Psoas muscle (tissue), 8 donors: ENCODE measurements at regions of chr3 and their contacts with region 1.

Region 1: GRCh38 chr3:3170998-3171397 is 8.5 kb downstream of the CRBN start:
- DNase-seq: no peak
- ATAC-seq: no peak
- H3K4me3 ChIP-seq: no peak overlapping the region
- H3K27ac ChIP-seq: no peak overlapping the region
- H3K4me1 ChIP-seq: no peaks in the 10 kb centered on the region
- H3K27me3 ChIP-seq: no peaks in the 10 kb centered on the region
- CTCF ChIP-seq: peak; percentile 19

Region 2: GRCh38 chr3:3134750-3135448 is 36.1 kb before region 1 on chr3:
- intact Hi-C with region 1: loop called in 1 of 2 experiments (anchors 5 kb)
- DNase-seq: no peak
- ATAC-seq: peak in 3 of 4 donors; percentile 20 to 53 (median 42)
- H3K4me3 ChIP-seq: no peak overlapping the region
- H3K27ac ChIP-seq: no peak overlapping the region
- H3K4me1 ChIP-seq: no peaks in the 10 kb centered on the region
- H3K27me3 ChIP-seq: no peaks in the 10 kb centered on the region
- CTCF ChIP-seq: no peak